ENCODE measurements at regions of chr2 and their contacts with region 1.

Region 1: GRCh38 chr2:120279708-120280107 is 27.1 kb downstream of the RALB start:
- DNase-seq: no peak
- H3K4me3 ChIP-seq: no peak overlapping the region
- H3K27ac ChIP-seq: no peak overlapping the region
- H3K4me1 ChIP-seq: no peaks in the 10 kb centered on the region
- H3K27me3 ChIP-seq: no peaks in the 10 kb centered on the region
- CTCF ChIP-seq: no peak
- POLR2A ChIP-seq: no peak

Region 2: DNA sequence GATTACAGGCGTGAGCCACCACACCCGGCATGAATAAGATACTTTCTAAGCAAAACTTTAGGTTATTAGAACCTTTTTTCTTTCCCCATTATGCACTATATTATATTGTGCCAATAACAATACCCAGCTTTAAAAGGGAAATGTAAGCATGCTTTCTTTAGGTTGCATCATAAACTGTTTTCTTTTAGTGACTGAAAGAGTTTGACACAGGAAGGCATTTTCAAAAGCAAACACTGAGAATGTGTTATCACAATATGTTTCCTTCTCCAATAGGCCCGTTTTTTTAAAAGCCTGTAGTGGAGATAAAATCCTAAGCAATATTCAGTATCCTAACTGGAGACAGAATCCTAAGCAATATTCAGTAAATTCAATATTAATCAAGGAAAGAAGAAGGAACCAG is 283.6 kb before region 1 on chr2:
- CTCF ChIA-PET with region 1: no interaction called
- POLR2A ChIA-PET with region 1: no interaction called
- dilution Hi-C with region 1: no loop called
- intact Hi-C with region 1: no loop called
- DNase-seq: peak; percentile 24
- H3K4me3 ChIP-seq: no peak overlapping the region
- H3K27ac ChIP-seq: no peak overlapping the region
- H3K4me1 ChIP-seq: no peaks in the 10 kb centered on the region
- H3K27me3 ChIP-seq: no peaks in the 10 kb centered on the region
- CTCF ChIP-seq: no peak
- POLR2A ChIP-seq: no peak

Region 3: GRCh38 chr2:120265006-120265405 is 14.7 kb before region 1 on chr2:
- CTCF ChIA-PET with region 1: interaction called, 10 read pairs
- POLR2A ChIA-PET with region 1: no interaction called
- dilution Hi-C with region 1: no loop called
- intact Hi-C with region 1: no loop called
- DNase-seq: peak; percentile 45
- H3K4me3 ChIP-seq: no peak overlapping the region
- H3K27ac ChIP-seq: peak overlapping the region; percentile 15
- H3K4me1 ChIP-seq: peaks cover 52% of the 10 kb centered on the region
- H3K27me3 ChIP-seq: no peaks in the 10 kb centered on the region
- CTCF ChIP-seq: no peak
- POLR2A ChIP-seq: no peak